Calu3 (cell line): ENCODE measurements at regions of chr11 and their contacts with region 1.

Region 1: GRCh38 chr11:93234602-93235207 is 36.9 kb upstream of the SLC36A4 start:
- DNase-seq: peak; percentile 66
- H3K4me3 Mint-ChIP-seq: no peak overlapping the region
- H3K27ac Mint-ChIP-seq: no peak overlapping the region
- H3K4me1 Mint-ChIP-seq: peaks cover 8% of the 10 kb centered on the region
- H3K27me3 Mint-ChIP-seq: peaks cover 53% of the 10 kb centered on the region
- CTCF ChIP-seq: peak; percentile 49

Region 2: DNA sequence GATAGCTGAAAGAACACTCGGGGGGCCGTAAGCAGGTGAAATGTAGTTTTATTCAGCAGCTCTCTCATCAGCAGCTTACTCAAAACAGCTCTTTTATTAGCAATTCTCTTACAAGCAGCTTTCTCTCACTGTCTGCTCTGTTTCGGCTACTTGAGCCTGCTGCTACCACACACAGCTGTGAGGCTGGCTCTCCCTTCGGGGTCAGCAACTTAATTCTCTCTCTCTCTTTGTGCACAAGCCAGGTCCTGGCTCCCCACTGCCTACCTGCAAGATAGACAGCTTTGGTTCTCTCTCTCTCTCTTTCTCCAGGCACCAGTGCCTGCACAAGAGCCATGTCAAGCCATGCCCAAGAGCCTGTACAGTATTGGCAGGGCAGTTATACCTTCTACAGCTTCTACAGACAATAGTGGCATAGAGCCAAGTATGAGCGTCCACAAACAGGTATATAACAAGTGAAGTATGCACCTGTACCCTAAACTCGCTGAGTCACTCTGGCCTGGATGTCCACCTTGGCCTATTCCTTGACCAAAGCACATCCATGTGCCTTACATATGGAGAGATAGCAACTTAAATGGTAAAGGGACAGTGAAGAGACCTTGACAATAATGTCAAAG is 154.5 kb before region 1 on chr11:
- CTCF ChIA-PET with region 1: no interaction called
- intact Hi-C with region 1: no loop called
- DNase-seq: no peak
- H3K4me3 Mint-ChIP-seq: no peak overlapping the region
- H3K27ac Mint-ChIP-seq: no peak overlapping the region
- H3K4me1 Mint-ChIP-seq: no peaks in the 10 kb centered on the region
- H3K27me3 Mint-ChIP-seq: peaks cover 29% of the 10 kb centered on the region
- CTCF ChIP-seq: no peak

Region 3: GRCh38 chr11:93279851-93280347 is 45.2 kb after region 1 on chr11:
- CTCF ChIA-PET with region 1: no interaction called
- intact Hi-C with region 1: no loop called
- DNase-seq: no peak
- H3K4me3 Mint-ChIP-seq: no peak overlapping the region
- H3K27ac Mint-ChIP-seq: no peak overlapping the region
- H3K4me1 Mint-ChIP-seq: no peaks in the 10 kb centered on the region
- H3K27me3 Mint-ChIP-seq: no peaks in the 10 kb centered on the region
- CTCF ChIP-seq: no peak

Region 4: GRCh38 chr11:93623179-93623578 is 388.5 kb after region 1 on chr11:
- CTCF ChIA-PET with region 1: interaction called, 4 read pairs
- intact Hi-C with region 1: loop called (anchors 1 kb)
- DNase-seq: peak; percentile 15
- H3K4me3 Mint-ChIP-seq: no peak overlapping the region
- H3K27ac Mint-ChIP-seq: no peak overlapping the region
- H3K4me1 Mint-ChIP-seq: peaks cover 18% of the 10 kb centered on the region
- H3K27me3 Mint-ChIP-seq: no peaks in the 10 kb centered on the region
- CTCF ChIP-seq: no peak

Region 5: DNA sequence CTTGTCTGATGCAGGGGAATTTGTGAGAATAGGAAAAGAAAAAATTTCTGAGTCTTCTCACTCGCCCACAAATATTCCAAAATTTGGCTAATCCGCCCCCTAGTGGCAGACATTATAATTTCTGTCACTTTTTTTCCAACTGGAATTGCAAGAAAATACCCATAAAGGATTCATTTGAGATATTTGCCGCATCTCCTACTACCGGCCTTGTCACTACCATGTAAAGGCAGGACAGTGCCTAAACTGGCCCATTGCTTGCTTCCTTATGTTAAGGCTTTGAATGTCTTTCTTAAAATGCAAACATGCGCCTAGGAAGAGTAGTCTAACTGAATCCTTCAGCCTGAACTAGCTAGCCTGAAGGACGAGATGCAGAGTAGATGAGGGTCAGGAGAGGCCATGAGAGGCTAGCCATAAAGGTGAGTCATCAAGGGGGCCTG is 417.5 kb after region 1 on chr11:
- CTCF ChIA-PET with region 1: interaction called, 5 read pairs
- intact Hi-C with region 1: loop called (anchors 1 kb)
- DNase-seq: peak; percentile 52
- H3K4me3 Mint-ChIP-seq: no peak overlapping the region
- H3K27ac Mint-ChIP-seq: no peak overlapping the region
- H3K4me1 Mint-ChIP-seq: no peaks in the 10 kb centered on the region
- H3K27me3 Mint-ChIP-seq: peaks cover 49% of the 10 kb centered on the region
- CTCF ChIP-seq: peak; percentile 24